WTC11 (cell line): ENCODE measurements at regions of chr7 and their contacts with region 1.

Region 1: DNA sequence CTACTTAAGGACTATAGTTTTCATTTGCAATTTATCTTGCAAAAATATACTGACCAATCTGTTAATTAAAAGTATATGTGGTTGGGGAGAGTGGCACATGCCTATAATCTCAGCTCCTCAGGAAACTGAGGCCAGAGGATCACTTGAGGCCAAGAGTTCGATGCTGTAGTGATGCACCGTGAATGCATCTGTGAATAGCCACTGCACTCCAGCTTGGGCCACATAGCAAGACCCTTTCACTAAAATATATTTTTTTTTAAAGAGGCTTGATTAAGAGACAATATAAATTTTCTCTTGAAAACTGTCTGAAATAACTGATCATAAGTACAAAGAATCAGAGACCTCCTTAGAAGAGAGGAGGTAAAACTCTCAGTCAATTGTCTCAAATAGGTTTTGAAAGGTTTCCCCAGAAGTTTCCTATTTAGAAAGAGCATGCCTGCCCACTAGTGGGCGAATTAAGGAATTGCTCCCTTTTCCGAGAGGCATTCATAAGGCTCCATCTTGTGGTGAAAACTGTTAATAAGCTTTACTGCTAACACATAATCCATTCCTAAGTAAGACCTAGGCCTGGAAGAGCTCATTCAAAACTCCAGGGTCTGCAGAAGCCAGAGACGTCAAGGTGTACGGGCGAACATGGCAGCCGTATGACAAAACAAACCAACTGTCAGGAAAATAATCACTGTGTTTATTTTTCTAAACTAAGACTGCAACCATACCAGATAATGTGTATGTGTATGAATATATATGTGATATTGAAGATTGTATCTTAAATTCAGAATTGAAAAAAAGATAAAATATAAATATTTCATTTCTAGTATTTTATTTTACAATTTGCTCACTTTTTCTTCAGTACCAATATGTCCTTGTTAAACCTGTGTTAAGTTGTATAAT is 6.8 kb upstream of the TAS2R40 start:
- DNase-seq: peak; percentile 44
- ATAC-seq: peak; percentile 99
- H3K4me3 Mint-ChIP-seq: no peak overlapping the region
- H3K27ac Mint-ChIP-seq: no peak overlapping the region
- H3K4me1 Mint-ChIP-seq: no peaks in the 10 kb centered on the region
- H3K27me3 Mint-ChIP-seq: no peaks in the 10 kb centered on the region
- CTCF ChIP-seq: peak; percentile 99

Region 2: GRCh38 chr7:142632291-142633134 is 582.5 kb before region 1 on chr7:
- CTCF ChIA-PET with region 1: interaction called, 11 read pairs
- POLR2A ChIA-PET with region 1: no interaction called
- DNase-seq: peak; percentile 71
- ATAC-seq: peak; percentile 98
- H3K4me3 Mint-ChIP-seq: no peak overlapping the region
- H3K27ac Mint-ChIP-seq: no peak overlapping the region
- H3K4me1 Mint-ChIP-seq: peaks cover 2% of the 10 kb centered on the region; the same call in 1 of the 2 replicates
- H3K27me3 Mint-ChIP-seq: peaks cover 13% of the 10 kb centered on the region
- CTCF ChIP-seq: peak; percentile 63

Region 3: DNA sequence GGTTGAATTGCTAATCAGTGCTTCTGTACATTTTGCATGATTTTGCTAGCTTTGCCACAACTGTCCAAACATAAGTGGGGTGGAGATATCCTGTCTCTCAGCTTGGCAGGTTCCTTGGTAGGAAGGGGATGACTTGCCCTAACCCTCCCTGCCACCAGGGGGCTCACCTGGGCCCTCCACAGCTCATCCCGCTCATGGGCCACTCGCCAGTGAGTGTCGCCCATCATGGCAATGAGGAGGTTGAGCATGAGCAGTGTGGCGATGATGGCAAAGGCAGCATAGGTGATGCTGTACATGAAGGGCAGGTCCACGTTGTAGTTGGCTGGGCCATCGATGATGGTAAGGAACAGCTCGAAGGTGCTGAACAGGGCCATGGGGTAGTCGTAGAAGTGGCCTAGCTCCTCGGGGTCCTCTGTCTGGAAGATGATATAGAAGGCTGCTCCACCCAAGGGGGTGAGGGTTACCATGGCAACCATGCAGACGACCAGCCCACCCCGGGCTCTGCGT is 341.7 kb before region 1 on chr7:
- CTCF ChIA-PET with region 1: interaction called, 24 read pairs
- POLR2A ChIA-PET with region 1: no interaction called
- DNase-seq: peak; percentile 69
- ATAC-seq: peak; percentile 88
- H3K4me3 Mint-ChIP-seq: no peak overlapping the region
- H3K27ac Mint-ChIP-seq: no peak overlapping the region
- H3K4me1 Mint-ChIP-seq: no peaks in the 10 kb centered on the region
- H3K27me3 Mint-ChIP-seq: no peaks in the 10 kb centered on the region
- CTCF ChIP-seq: peak; percentile 90

Region 4: GRCh38 chr7:143008007-143008901 is 206.8 kb before region 1 on chr7:
- CTCF ChIA-PET with region 1: interaction called, 346 read pairs
- POLR2A ChIA-PET with region 1: interaction called, 3 read pairs
- DNase-seq: peak; percentile 88
- ATAC-seq: peak; percentile 96
- H3K4me3 Mint-ChIP-seq: no peak overlapping the region
- H3K27ac Mint-ChIP-seq: no peak overlapping the region
- H3K4me1 Mint-ChIP-seq: peaks cover 4% of the 10 kb centered on the region
- H3K27me3 Mint-ChIP-seq: peaks cover 11% of the 10 kb centered on the region
- CTCF ChIP-seq: peak; percentile 95

Region 5: DNA sequence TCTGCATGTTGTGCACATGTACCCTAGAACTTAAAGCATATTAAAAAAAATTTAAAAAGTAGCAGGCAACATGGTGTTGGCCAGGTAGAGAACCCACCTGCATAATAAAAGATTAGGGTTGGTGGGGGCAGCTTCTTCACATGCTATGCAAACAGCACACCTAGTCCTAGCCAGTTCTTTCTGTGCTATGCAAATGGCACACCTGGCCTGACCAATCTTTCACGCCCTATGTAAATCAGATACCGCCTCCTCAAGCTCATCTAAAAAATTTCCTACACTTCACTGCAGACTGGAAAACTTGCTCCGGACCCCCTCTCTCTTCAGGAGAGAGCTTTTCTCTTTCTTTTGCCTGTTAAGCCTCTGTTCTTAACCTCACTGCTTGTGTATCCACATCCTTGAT is 97.6 kb before region 1 on chr7:
- CTCF ChIA-PET with region 1: interaction called, 14 read pairs
- POLR2A ChIA-PET with region 1: no interaction called
- DNase-seq: no peak
- ATAC-seq: peak; percentile 56
- H3K4me3 Mint-ChIP-seq: no peak overlapping the region
- H3K27ac Mint-ChIP-seq: no peak overlapping the region
- H3K4me1 Mint-ChIP-seq: peaks cover 8% of the 10 kb centered on the region
- H3K27me3 Mint-ChIP-seq: peaks cover 5% of the 10 kb centered on the region; the same call in 1 of the 2 replicates
- CTCF ChIP-seq: no peak

Region 6: DNA sequence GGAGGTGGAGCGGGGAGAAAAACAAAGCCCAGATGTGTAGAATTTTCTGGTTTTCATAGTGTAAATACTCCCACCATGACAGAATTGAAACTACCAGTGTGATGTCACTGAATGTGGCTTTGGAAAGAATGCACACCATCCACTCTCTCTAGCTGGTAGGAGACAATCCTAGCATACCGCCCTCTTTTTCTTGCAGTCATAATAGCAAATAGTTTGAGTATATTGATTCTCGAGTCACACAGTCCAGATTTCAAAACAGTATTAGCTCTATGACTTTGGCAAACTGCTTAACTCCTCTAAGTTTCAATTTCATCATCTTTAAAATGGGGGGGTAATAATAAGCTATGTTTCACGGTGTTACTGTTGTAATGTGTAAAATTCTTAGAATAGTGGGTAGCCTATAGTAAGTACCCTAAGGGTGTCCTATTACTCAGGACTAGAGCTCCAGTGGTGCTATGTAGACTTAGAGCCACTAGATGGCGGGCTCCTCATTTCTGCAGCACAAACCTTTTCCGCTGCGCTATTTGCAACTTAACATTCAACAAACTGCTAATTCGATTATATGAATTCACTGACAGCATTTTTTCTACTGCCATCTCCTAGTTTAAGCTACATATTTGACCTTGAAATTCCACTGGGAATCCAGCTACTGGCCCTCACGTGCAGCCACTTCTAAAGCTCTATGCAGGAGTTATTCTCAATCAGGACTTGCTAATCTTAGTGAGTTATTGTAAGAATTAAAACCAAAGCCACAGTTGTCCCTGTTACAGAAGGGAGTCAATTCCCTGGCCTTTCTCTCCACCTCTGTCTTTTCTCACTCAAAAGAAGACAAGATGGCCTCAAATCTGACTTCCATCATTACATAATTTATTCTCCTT is 25.5 kb after region 1 on chr7:
- CTCF ChIA-PET with region 1: interaction called, 26 read pairs
- POLR2A ChIA-PET with region 1: no interaction called
- DNase-seq: peak; percentile 70
- ATAC-seq: peak; percentile 99
- H3K4me3 Mint-ChIP-seq: no peak overlapping the region
- H3K27ac Mint-ChIP-seq: no peak overlapping the region
- H3K4me1 Mint-ChIP-seq: no peaks in the 10 kb centered on the region
- H3K27me3 Mint-ChIP-seq: peaks cover 22% of the 10 kb centered on the region
- CTCF ChIP-seq: peak; percentile 83

Region 7: GRCh38 chr7:143391462-143392404 is 176.7 kb after region 1 on chr7:
- CTCF ChIA-PET with region 1: no interaction called
- POLR2A ChIA-PET with region 1: no interaction called
- DNase-seq: no peak
- ATAC-seq: no peak
- H3K4me3 Mint-ChIP-seq: no peak overlapping the region
- H3K27ac Mint-ChIP-seq: peak overlapping the region; percentile 57; the same call in 1 of the 2 replicates
- H3K4me1 Mint-ChIP-seq: peaks cover 9% of the 10 kb centered on the region
- H3K27me3 Mint-ChIP-seq: no peaks in the 10 kb centered on the region
- CTCF ChIP-seq: no peak